ENCODE measurements at regions of chr5 and their contacts with region 1.

Region 1: DNA sequence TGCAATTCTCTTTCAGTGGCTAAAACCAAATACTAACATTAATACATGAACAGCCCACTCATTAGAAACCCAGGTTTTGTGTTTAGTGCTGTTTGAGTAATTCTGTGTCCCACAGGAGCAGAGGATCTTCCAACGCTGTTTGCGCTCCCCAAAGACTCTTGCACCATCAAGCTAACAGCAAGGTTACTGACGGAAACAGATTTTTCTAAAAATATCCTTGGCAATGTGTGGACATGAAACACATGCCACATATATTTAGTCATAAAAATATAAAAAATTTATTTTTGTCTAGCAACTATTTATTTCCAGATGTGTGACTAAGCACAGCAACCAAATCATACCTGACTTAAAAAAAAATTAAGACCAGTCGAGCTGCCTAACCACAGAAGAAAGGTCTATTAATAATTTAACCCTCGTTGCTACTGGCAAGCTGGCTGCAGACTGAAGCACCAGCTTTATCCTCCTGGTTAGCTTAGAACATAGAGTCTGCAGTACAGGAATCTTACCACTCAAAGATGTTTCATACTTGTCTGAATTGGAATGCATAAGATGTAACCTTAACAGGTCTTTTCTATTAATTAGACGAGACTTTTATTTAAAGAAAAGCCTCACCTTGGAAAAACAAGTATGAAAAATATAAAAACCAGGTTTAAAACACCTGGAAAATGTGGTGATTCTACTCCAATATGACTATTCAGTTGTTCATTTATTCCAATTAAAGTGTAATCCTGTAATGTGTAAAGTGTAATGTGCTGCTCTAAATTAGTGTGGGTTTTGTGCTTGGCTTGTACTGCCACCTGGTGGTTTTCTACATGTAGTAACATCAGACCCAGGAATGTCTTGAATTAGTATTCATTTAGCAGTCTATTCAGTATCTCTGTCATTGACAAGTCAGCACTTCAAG is 272.5 kb downstream of the EPB41L4A start:
- DNase-seq: peak in 3 of 5 donors; percentile 71 to 90 (median 83)
- H3K4me3 ChIP-seq: no peak overlapping the region
- H3K27ac ChIP-seq: no peak overlapping the region
- H3K4me1 ChIP-seq: peaks cover 0 to 3% (median 3%) of the 10 kb centered on the region in 3 donors
- H3K27me3 ChIP-seq: no peaks in the 10 kb centered on the region
- CTCF ChIP-seq: peak; percentile 86

Region 2: GRCh38 chr5:111548992-111549649 is 597.5 kb before region 1 on chr5:
- intact Hi-C with region 1: loop called (anchors 10 kb)
- DNase-seq: no peak
- H3K4me3 ChIP-seq: no peak overlapping the region
- H3K27ac ChIP-seq: no peak overlapping the region
- H3K4me1 ChIP-seq: peaks cover 0 to 4% (median 3%) of the 10 kb centered on the region in 3 donors
- H3K27me3 ChIP-seq: no peaks in the 10 kb centered on the region
- CTCF ChIP-seq: no peak

Region 3: GRCh38 chr5:112036206-112036605 is 110.4 kb before region 1 on chr5:
- intact Hi-C with region 1: no loop called
- DNase-seq: no peak
- H3K4me3 ChIP-seq: no peak overlapping the region
- H3K27ac ChIP-seq: no peak overlapping the region
- H3K4me1 ChIP-seq: no peaks in the 10 kb centered on the region
- H3K27me3 ChIP-seq: no peaks in the 10 kb centered on the region
- CTCF ChIP-seq: no peak

Measured in kidney (tissue), 22 donors.